ENCODE measurements at regions of chr11 and their contacts with region 1.

Region 1: GRCh38 chr11:33857933-33858371 is 33.9 kb downstream of the LMO2 start:
- DNase-seq: peak; percentile 65
- ATAC-seq: peak; percentile 98
- H3K4me3 Mint-ChIP-seq: no peak overlapping the region
- H3K27ac Mint-ChIP-seq: no peak overlapping the region
- H3K4me1 Mint-ChIP-seq: peaks cover 8% of the 10 kb centered on the region
- H3K27me3 Mint-ChIP-seq: no peaks in the 10 kb centered on the region
- CTCF ChIP-seq: peak; percentile 39

Region 2: GRCh38 chr11:33808228-33808828 is 49.6 kb before region 1 on chr11:
- CTCF ChIA-PET with region 1: interaction called, 4 read pairs
- POLR2A ChIA-PET with region 1: no interaction called
- intact Hi-C with region 1: loop called (anchors 1 kb)
- DNase-seq: peak; percentile 76
- ATAC-seq: peak; percentile 91
- H3K4me3 Mint-ChIP-seq: no peak overlapping the region
- H3K27ac Mint-ChIP-seq: no peak overlapping the region
- H3K4me1 Mint-ChIP-seq: no peaks in the 10 kb centered on the region
- H3K27me3 Mint-ChIP-seq: peaks cover 6% of the 10 kb centered on the region
- CTCF ChIP-seq: peak; percentile 95

Region 3: DNA sequence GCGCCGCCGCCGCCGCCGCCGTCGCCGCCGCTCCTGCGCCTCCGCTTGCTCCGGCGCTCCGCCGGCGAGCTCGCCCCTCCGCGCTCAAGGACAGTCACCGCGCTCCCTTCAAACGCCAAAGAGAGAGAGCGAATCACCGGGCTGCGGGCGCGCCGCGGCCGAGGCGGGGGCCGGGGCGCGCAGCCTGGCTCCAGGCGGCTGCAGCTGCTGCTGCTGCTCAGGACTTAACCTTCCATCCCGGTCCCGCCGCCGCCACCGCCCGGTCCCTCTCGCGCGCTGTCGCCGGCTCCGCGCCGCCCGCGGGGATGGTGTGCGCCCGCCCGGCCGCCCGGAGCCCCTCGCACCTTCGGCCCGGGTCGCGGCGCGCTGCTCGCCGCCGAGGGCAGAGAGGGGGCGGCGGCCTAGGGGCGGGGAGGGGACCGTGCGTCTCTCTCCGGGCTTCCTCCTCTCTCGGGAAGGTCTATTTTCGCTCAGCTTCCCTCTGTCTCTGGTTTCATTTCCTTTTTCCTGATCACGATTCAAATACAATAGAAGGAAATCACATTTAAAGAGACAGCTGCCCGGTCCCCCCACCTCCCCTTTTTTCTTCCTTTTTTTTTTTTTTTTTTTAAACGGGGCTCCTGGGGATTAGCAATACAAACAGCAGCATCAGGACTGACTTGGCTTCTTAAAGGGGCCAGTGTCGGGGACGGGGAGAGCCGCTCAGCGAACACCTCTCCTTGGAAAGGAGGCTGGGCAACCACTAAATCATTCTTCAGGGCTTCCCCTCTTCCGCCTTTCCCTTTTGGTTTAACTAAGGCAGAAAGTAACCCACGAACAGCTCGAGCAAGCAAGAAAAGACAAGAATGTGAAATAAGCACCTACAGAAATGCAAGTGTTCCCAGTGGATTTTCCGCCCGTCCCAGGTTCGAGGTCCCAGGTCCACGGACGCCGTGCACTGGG is 11.8 kb after region 1 on chr11:
- CTCF ChIA-PET with region 1: interaction called, 17 read pairs
- POLR2A ChIA-PET with region 1: interaction called, 3 read pairs
- intact Hi-C with region 1: loop called (anchors 1 kb)
- DNase-seq: peak; percentile 57
- ATAC-seq: peak; percentile 72
- H3K4me3 Mint-ChIP-seq: peak overlapping the region; percentile 92
- H3K27ac Mint-ChIP-seq: peak overlapping the region; percentile 74
- H3K4me1 Mint-ChIP-seq: peaks cover 36% of the 10 kb centered on the region
- H3K27me3 Mint-ChIP-seq: no peaks in the 10 kb centered on the region
- CTCF ChIP-seq: no peak

Region 4: DNA sequence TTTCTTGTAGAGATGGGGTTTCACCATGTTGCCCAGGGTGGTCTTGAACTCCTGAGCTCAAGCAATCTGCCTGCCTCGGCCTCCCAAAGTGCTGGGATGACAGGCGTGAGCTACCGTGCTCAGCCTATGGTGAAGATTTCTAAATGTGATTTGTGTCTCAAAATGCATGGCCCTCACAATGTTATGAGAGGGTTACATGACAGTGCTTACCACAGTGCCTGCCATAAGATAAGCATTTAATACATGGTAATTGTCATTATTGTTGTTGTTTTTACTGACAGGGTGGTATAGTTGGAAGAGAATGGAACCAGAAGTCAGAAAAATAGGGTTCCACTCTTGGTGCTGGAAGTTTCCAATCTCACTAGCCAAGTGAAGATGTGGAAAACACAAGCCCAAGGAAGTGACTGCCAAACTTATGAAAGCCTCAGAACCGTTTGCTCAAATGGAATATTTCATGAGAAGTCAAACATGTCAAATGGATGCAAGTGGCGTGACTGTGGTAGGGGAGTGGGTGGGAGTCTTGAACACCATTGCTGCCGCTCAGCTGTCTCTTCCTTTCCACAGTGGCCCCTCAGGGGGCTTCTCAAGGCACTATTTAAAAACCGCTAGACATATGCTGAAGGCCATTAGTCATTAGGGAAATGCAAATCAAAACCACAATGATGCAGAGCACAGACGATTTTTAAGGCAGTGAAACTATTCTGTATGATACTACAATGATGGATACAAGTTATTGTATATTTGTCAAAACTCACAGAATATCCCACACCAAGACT is 63.1 kb after region 1 on chr11:
- CTCF ChIA-PET with region 1: interaction called, 3 read pairs
- POLR2A ChIA-PET with region 1: interaction called, 3 read pairs
- intact Hi-C with region 1: loop called (anchors 2 kb)
- DNase-seq: peak; percentile 44
- ATAC-seq: peak; percentile 97
- H3K4me3 Mint-ChIP-seq: peak overlapping the region; percentile 47
- H3K27ac Mint-ChIP-seq: peak overlapping the region; percentile 70
- H3K4me1 Mint-ChIP-seq: peaks cover 26% of the 10 kb centered on the region
- H3K27me3 Mint-ChIP-seq: peaks cover 28% of the 10 kb centered on the region
- CTCF ChIP-seq: no peak

Region 5: GRCh38 chr11:33952805-33953204 is 94.9 kb after region 1 on chr11:
- CTCF ChIA-PET with region 1: no interaction called
- POLR2A ChIA-PET with region 1: no interaction called
- intact Hi-C with region 1: no loop called
- DNase-seq: no peak
- ATAC-seq: no peak
- H3K4me3 Mint-ChIP-seq: no peak overlapping the region
- H3K27ac Mint-ChIP-seq: no peak overlapping the region
- H3K4me1 Mint-ChIP-seq: no peaks in the 10 kb centered on the region
- H3K27me3 Mint-ChIP-seq: no peaks in the 10 kb centered on the region
- CTCF ChIP-seq: no peak

Region 6: GRCh38 chr11:34021977-34022735 is 164.2 kb after region 1 on chr11:
- CTCF ChIA-PET with region 1: no interaction called
- POLR2A ChIA-PET with region 1: no interaction called
- intact Hi-C with region 1: no loop called
- DNase-seq: no peak
- ATAC-seq: no peak
- H3K4me3 Mint-ChIP-seq: no peak overlapping the region
- H3K27ac Mint-ChIP-seq: no peak overlapping the region
- H3K4me1 Mint-ChIP-seq: no peaks in the 10 kb centered on the region
- H3K27me3 Mint-ChIP-seq: no peaks in the 10 kb centered on the region
- CTCF ChIP-seq: no peak